ENCODE measurements at regions of chr20 and their contacts with region 1.

Region 1: DNA sequence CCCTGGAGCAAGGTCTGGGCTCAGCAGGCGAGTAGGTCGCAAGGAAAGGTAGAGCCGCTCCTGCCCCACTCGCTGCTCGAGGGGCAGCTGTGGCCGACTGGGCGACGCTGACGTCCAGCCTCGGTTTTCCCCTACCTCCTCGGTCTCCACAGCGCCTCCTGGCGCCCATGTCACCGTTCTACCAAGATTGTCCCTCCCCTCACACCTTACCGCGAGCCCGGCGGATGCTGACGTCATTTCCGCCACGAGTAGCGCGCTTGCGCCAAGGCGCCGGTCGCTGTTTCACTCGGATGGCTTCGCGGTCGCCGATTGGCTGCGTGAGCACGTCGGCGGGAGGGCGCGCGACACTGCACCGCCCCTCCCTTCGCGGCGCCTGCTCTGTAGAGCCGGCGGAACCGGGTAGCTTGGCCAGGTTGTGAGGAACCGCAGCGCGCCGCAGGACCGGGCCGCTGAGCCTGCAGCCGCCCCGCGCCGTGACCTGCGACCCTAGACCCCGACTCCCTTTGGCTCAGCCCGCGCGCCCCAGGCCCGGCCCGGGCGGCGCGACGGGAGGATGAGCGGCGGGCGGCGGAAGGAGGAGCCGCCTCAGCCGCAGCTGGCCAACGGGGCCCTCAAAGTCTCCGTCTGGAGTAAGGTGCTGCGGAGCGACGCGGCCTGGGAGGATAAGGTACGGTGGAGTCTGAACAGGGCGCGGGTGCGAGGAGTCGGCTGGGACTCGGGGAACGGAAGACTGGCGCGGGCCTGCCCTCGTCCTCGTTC is at the start of gene RAB5IF:
- H3K4me3 Mint-ChIP-seq: peak within 1 kb of the TSS; percentile 99
- H3K27ac Mint-ChIP-seq: peak within 1 kb of the TSS; percentile 95
- H3K4me1 Mint-ChIP-seq: peaks cover 40% of the 10 kb centered on the region
- H3K27me3 Mint-ChIP-seq: no peaks in the 10 kb centered on the region

Region 2: GRCh38 chr20:36460648-36461599 is 144.7 kb before region 1 on chr20:
- intact Hi-C with region 1: loop called (anchors 5 kb)
- H3K4me3 Mint-ChIP-seq: peak overlapping the region; percentile 62
- H3K27ac Mint-ChIP-seq: peak overlapping the region; percentile 93
- H3K4me1 Mint-ChIP-seq: peaks cover 49% of the 10 kb centered on the region
- H3K27me3 Mint-ChIP-seq: peaks cover under 1% of the 10 kb centered on the region

Region 3: GRCh38 chr20:36550797-36551299 is 54.7 kb before region 1 on chr20:
- intact Hi-C with region 1: loop called (anchors 1 kb)
- H3K4me3 Mint-ChIP-seq: no peak overlapping the region
- H3K27ac Mint-ChIP-seq: no peak overlapping the region
- H3K4me1 Mint-ChIP-seq: no peaks in the 10 kb centered on the region
- H3K27me3 Mint-ChIP-seq: no peaks in the 10 kb centered on the region

Region 4: GRCh38 chr20:36573103-36573794 is 32.3 kb before region 1 on chr20 and contains the start of gene TGIF2:
- intact Hi-C with region 1: loop called (anchors 5 kb)
- H3K4me3 Mint-ChIP-seq: peak within 1 kb of the TSS; percentile 83
- H3K27ac Mint-ChIP-seq: peak within 1 kb of the TSS; percentile 78
- H3K4me1 Mint-ChIP-seq: peaks cover 33% of the 10 kb centered on the region
- H3K27me3 Mint-ChIP-seq: peaks cover 4% of the 10 kb centered on the region

Region 5: GRCh38 chr20:36591854-36592641 is 13.5 kb before region 1 on chr20:
- intact Hi-C with region 1: loop called (anchors 1 kb)
- H3K4me3 Mint-ChIP-seq: no peak overlapping the region
- H3K27ac Mint-ChIP-seq: peak overlapping the region; percentile 61
- H3K4me1 Mint-ChIP-seq: peaks cover 67% of the 10 kb centered on the region
- H3K27me3 Mint-ChIP-seq: no peaks in the 10 kb centered on the region

Region 6: DNA sequence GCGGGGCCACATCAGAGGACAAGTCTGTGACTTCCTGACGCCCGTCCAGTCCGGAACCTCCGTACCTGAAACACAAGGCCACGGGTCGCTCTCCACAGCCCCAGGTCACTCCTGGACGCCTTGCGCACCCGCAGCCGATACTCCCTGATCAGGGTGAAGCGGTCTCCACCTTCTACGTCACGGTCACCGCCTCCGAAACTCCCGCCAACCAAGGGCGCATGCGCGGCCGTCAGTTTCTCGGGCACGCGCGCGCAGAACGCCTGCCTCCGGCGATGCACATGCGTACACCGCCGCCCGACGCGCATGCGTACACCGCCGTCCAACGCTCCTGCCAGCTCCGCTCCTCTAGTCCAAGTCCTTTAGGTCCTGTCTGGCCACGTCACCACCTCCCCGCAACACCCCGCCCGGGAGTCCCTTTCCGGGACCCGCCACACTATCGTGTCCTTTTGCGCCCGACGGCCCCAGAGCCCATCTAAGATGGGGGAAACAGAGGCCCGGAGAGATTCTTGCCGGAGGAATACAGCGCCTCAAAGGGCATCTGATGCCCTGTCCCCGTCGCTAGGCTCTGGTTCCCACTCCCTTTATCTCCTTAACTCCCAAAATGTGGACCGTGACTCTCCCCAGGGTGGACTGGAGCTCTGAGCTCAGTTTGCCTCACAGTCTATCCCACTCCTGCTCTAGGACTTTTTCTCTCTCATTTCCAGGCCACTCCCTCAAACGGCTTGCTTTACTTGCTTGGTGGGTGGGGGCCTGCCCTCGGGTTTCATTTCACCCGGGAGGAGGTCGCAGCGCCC is 168.2 kb after region 1 on chr20 and contains the start of gene DSN1:
- intact Hi-C with region 1: loop called (anchors 5 kb)
- H3K4me3 Mint-ChIP-seq: peak within 1 kb of the TSS; percentile 83
- H3K27ac Mint-ChIP-seq: peak within 1 kb of the TSS; percentile 91
- H3K4me1 Mint-ChIP-seq: peaks cover 71% of the 10 kb centered on the region
- H3K27me3 Mint-ChIP-seq: no peaks in the 10 kb centered on the region

Measured in dendritic cell treated with granulocyte-macrophage colony-stimulating factor and Interleukin-4, amounts not matched to agents 40 ng/mL and 50 ng/mL, for 4 days (primary cell).